MCF 10A (cell line): ENCODE measurements at regions of chr11 and their contacts with region 1.

Region 1: DNA sequence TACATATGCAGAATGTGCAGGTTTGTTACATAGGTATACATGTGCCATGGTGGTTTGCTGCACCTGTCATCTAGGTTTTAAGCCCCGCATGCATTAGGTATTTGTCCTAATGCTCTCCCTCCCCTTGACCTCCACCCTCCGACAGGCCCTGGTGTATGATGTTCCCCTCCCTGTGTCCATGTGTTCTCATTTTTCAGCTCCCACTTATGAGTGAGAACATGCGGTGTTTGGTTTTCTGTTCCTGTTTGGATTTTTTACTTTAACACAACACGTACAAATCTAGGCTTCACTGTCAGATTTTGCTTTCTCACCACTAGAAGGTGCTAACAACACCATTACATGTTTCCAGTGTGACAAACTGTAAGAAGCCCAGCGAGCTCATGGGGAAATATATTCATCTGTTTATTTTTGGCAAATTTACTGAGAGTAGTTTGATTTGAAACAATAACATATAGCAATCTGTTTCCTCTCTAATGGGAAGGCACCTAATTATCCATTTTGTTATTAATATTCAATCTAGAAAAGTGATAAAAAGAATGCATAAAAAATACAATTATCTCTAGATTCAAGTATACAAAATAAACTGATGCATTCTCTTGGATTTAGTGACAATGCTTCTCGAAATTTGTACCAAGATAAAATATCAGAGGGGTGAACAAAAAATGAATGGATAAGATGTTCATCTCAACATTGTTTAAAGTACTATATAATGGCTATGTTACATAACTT is 23.2 kb upstream of the BIRC3 start:
- DNase-seq: peak; percentile 70
- H3K4me3 Mint-ChIP-seq: peak overlapping the region; percentile 35
- H3K27ac Mint-ChIP-seq: peak overlapping the region; percentile 7
- H3K4me1 Mint-ChIP-seq: peaks cover 18% of the 10 kb centered on the region
- H3K27me3 Mint-ChIP-seq: no peaks in the 10 kb centered on the region
- CTCF ChIP-seq: peak; percentile 52

Region 2: GRCh38 chr11:101466352-101466751 is 827.7 kb before region 1 on chr11:
- CTCF ChIA-PET with region 1: no interaction called
- POLR2A ChIA-PET with region 1: no interaction called
- intact Hi-C with region 1: no loop called
- DNase-seq: no peak
- H3K4me3 Mint-ChIP-seq: no peak overlapping the region
- H3K27ac Mint-ChIP-seq: no peak overlapping the region
- H3K4me1 Mint-ChIP-seq: peaks cover 6% of the 10 kb centered on the region
- H3K27me3 Mint-ChIP-seq: no peaks in the 10 kb centered on the region
- CTCF ChIP-seq: no peak

Region 3: GRCh38 chr11:102244681-102245409 is 49.2 kb before region 1 on chr11:
- CTCF ChIA-PET with region 1: no interaction called
- POLR2A ChIA-PET with region 1: no interaction called
- intact Hi-C with region 1: no loop called
- DNase-seq: peak; percentile 95
- H3K4me3 Mint-ChIP-seq: no peak overlapping the region
- H3K27ac Mint-ChIP-seq: peak overlapping the region; percentile 74
- H3K4me1 Mint-ChIP-seq: peaks cover 16% of the 10 kb centered on the region
- H3K27me3 Mint-ChIP-seq: no peaks in the 10 kb centered on the region
- CTCF ChIP-seq: no peak

Region 4: GRCh38 chr11:102306048-102306585 is 12.1 kb after region 1 on chr11:
- CTCF ChIA-PET with region 1: interaction called, 239 read pairs
- POLR2A ChIA-PET with region 1: interaction called, 69 read pairs
- intact Hi-C with region 1: loop called (anchors 1 kb)
- DNase-seq: peak; percentile 96
- H3K4me3 Mint-ChIP-seq: peak overlapping the region; percentile 50
- H3K27ac Mint-ChIP-seq: peak overlapping the region; percentile 99
- H3K4me1 Mint-ChIP-seq: peaks cover 54% of the 10 kb centered on the region
- H3K27me3 Mint-ChIP-seq: no peaks in the 10 kb centered on the region
- CTCF ChIP-seq: peak; percentile 17

Region 5: DNA sequence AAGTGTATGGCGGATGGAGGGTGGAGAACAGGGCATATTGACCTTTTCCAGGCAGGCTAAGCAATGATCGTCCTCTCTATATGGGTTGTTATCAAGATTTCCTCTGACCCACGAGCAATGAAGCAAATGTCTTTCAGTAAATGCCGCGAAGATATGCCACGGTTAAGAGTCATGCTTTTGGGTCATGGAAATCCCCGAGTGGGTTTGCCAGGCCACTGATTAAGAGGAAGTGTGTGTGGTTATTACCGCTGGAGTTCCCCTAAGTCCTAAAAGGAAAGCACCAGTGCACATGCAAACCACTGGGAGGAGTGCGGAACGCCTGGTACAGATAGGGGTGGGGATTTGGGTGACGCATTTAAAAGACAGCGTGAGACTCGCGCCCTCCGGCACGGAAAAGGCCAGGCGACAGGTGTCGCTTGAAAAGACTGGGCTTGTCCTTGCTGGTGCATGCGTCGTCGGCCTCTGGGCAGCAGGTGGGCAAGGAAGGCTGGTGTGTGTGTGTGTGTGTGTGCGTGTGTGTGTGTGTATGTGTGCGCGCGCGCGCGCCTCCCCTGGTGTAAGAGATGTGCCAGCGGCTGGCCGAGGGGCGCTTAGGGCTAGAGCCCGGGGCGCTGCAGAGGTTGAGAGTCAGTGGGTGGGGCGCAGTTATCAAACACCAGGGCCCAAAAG is 23.2 kb after region 1 on chr11 and contains the start of gene BIRC3:
- CTCF ChIA-PET with region 1: interaction called, 239 read pairs
- POLR2A ChIA-PET with region 1: interaction called, 76 read pairs
- intact Hi-C with region 1: loop called (anchors 1 kb)
- DNase-seq: peak; percentile 96
- H3K4me3 Mint-ChIP-seq: peak within 1 kb of the TSS; percentile 85
- H3K27ac Mint-ChIP-seq: peak within 1 kb of the TSS; percentile 99
- H3K4me1 Mint-ChIP-seq: peaks cover 50% of the 10 kb centered on the region
- H3K27me3 Mint-ChIP-seq: no peaks in the 10 kb centered on the region
- CTCF ChIP-seq: no peak
- total RNA-seq, gene BIRC3: 91.6 and 124 TPM in 2 replicates

Region 6: GRCh38 chr11:102323542-102324251 is 29.7 kb after region 1 on chr11:
- CTCF ChIA-PET with region 1: interaction called, 239 read pairs
- POLR2A ChIA-PET with region 1: interaction called, 76 read pairs
- intact Hi-C with region 1: no loop called
- DNase-seq: peak; percentile 61
- H3K4me3 Mint-ChIP-seq: peak overlapping the region; percentile 33
- H3K27ac Mint-ChIP-seq: no peak overlapping the region
- H3K4me1 Mint-ChIP-seq: peaks cover 31% of the 10 kb centered on the region
- H3K27me3 Mint-ChIP-seq: no peaks in the 10 kb centered on the region
- CTCF ChIP-seq: no peak

Region 7: DNA sequence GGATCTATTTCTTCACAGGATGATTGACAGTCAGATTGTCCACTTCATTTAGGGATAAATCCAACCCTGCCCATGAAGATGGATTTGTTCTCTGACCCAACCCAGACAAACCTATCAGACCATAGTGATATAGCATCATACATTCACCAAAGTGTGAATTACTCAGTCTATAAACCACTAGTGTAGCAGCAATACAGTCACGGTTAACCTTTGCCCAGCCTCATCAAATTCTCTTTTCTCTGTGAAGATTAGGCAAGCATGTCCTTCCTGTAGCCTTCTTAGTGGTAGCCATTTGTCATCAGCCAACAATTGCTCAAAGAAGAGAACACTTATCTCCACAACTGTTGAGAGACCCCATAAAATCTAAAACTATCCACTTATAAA is 38.6 kb after region 1 on chr11:
- CTCF ChIA-PET with region 1: interaction called, 15 read pairs
- POLR2A ChIA-PET with region 1: interaction called, 12 read pairs
- intact Hi-C with region 1: no loop called
- DNase-seq: no peak
- H3K4me3 Mint-ChIP-seq: no peak overlapping the region
- H3K27ac Mint-ChIP-seq: no peak overlapping the region
- H3K4me1 Mint-ChIP-seq: peaks cover 13% of the 10 kb centered on the region
- H3K27me3 Mint-ChIP-seq: no peaks in the 10 kb centered on the region
- CTCF ChIP-seq: no peak

Region 8: DNA sequence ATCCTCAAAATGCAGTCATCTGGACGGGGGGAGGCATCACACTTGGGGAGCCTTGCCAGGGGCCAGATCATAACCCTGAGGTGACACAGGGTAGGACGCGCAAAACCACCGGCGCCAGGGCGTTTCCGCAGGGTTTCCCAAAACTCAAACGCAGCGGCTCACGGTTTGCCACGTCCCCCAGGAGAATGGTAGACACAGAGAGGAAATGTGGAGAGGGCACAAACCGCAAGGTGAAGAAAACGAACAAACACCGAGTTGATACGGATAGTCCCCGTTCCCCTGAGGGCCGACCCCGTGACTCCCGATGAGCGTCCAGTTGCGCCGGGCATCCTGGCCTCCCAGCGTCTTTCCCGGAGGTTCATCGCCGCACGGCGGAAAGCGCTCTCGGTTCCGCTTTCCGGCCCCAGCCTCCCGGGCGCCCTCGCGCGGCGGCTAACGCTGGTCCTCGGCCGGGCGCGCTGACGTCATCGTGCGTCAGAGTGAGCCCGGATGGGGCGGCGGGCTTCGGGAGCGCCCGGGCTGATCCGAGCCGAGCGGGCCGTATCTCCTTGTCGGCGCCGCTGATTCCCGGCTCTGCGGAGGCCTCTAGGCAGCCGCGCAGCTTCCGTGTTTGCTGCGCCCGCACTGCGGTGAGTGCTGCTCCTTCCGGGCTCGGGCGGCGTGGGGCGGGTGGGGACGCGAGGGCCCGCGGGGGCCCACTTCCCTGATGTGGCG is 52.9 kb after region 1 on chr11 and contains the start of gene BIRC2:
- CTCF ChIA-PET with region 1: interaction called, 101 read pairs
- POLR2A ChIA-PET with region 1: interaction called, 36 read pairs
- intact Hi-C with region 1: loop called (anchors 1 kb)
- DNase-seq: peak; percentile 92
- H3K4me3 Mint-ChIP-seq: peak within 1 kb of the TSS; percentile 79
- H3K27ac Mint-ChIP-seq: peak within 1 kb of the TSS; percentile 97
- H3K4me1 Mint-ChIP-seq: peaks cover 15% of the 10 kb centered on the region
- H3K27me3 Mint-ChIP-seq: no peaks in the 10 kb centered on the region
- CTCF ChIP-seq: peak; percentile 67
- total RNA-seq, gene BIRC2: 46.2 and 50.0 TPM in 2 replicates